ENCODE measurements at regions of chr14 and their contacts with region 1.

Region 1: DNA sequence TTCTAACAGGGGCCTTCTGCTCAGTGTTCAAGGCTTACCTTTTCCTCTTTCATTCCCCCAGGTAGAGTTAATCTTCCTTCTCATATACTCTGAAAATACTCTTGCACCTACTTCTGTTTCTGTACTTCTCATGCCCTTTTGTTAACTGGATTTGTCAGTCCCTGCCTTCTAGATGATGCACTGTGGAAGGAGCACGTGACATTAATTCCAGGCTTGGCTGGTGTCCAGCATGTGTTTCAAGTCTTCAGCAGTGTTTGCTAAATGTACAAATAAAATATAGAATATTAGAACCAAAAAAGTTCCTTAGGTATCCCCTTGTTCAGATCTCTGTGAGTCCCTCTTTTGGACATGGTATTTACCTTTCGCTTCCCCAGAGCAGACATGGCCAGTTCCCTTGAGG is 27.9 kb upstream of the EVL start:
- DNase-seq: no peak
- ATAC-seq: no peak
- H3K4me3 Mint-ChIP-seq: no peak overlapping the region
- H3K27ac Mint-ChIP-seq: no peak overlapping the region
- H3K4me1 Mint-ChIP-seq: no peaks in the 10 kb centered on the region
- H3K27me3 Mint-ChIP-seq: no peaks in the 10 kb centered on the region

Region 2: GRCh38 chr14:99158150-99158549 is 879.2 kb before region 1 on chr14:
- CTCF ChIA-PET with region 1: no interaction called
- POLR2A ChIA-PET with region 1: interaction called, 12 read pairs
- intact Hi-C with region 1: no loop called
- DNase-seq: no peak
- ATAC-seq: no peak
- H3K4me3 Mint-ChIP-seq: no peak overlapping the region
- H3K27ac Mint-ChIP-seq: no peak overlapping the region
- H3K4me1 Mint-ChIP-seq: peaks cover 6% of the 10 kb centered on the region
- H3K27me3 Mint-ChIP-seq: no peaks in the 10 kb centered on the region